CD8-positive, alpha-beta T cell (primary cell): ENCODE measurements at regions of chr14 and their contacts with region 1.

Region 1: DNA sequence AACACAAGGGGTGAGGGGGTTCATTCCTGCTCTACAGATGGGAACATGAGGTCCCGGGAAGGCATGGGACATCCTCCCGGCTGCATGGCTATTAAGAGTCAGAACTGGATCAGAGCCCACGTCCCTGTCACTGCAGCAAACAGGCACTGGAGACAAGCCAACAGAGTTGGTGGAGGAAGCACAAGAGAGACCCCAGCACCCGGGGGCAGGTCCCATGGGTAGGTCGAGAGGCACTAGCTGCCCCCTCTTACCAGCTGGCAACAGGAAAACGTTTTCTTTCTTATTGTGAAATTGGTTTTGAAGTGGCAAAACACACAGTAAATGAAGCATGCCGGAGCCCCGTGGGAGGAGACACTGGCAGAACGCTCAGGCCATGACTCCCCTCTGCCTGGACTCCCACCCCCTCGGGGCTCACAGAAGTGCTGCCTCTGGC is 43.6 kb downstream of the SYNE3 start:
- DNase-seq: peak in 1 of 9 experiments; percentile 11
- ATAC-seq: peak; percentile 26
- H3K4me3 ChIP-seq: peak overlapping the region in 1 of 2 experiments; percentile 18
- H3K4me3 Mint-ChIP-seq: peak overlapping the region; percentile 46
- H3K27ac ChIP-seq: peak overlapping the region; percentile 10 to 54
- H3K27ac Mint-ChIP-seq: peak overlapping the region; percentile 94
- H3K4me1 ChIP-seq: peaks cover 27% of the 10 kb centered on the region
- H3K4me1 Mint-ChIP-seq: peaks cover 53% of the 10 kb centered on the region
- H3K27me3 ChIP-seq: no peaks in the 10 kb centered on the region
- H3K27me3 Mint-ChIP-seq: no peaks in the 10 kb centered on the region
- CTCF ChIP-seq: no peak

Region 2: DNA sequence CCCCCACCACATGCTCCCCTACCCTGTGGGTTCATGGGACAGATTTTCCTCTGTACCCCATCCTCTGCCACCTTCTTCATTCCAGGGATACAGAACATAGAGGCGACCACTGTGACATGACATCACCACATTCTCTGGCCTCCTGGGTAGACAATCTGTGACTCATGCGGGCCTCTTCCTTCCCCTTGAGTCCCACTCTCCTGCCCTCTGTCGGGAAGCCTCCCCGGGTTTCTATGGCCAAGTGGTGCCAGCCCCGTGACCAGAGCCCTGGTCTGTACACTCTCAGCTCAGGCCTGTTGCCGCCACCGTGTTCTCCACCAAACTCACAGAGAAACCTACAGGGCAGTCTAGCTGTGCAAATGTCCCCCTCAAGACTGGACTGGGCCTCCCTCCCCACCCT is 161.1 kb before region 1 on chr14:
- CTCF ChIA-PET with region 1: no interaction called
- POLR2A ChIA-PET with region 1: no interaction called
- intact Hi-C with region 1: no loop called
- DNase-seq: peak in 1 of 9 experiments; percentile 18
- ATAC-seq: no peak
- H3K4me3 ChIP-seq: no peak overlapping the region
- H3K4me3 Mint-ChIP-seq: no peak overlapping the region
- H3K27ac ChIP-seq: no peak overlapping the region
- H3K27ac Mint-ChIP-seq: no peak overlapping the region
- H3K4me1 ChIP-seq: no peaks in the 10 kb centered on the region
- H3K4me1 Mint-ChIP-seq: no peaks in the 10 kb centered on the region
- H3K27me3 ChIP-seq: no peaks in the 10 kb centered on the region
- H3K27me3 Mint-ChIP-seq: peaks cover 2% of the 10 kb centered on the region
- CTCF ChIP-seq: no peak

Region 3: GRCh38 chr14:95431199-95432143 is 41.4 kb before region 1 on chr14:
- CTCF ChIA-PET with region 1: no interaction called
- POLR2A ChIA-PET with region 1: no interaction called
- intact Hi-C with region 1: no loop called
- DNase-seq: peak in 1 of 9 experiments; percentile 20
- ATAC-seq: no peak
- H3K4me3 ChIP-seq: no peak overlapping the region
- H3K4me3 Mint-ChIP-seq: no peak overlapping the region
- H3K27ac ChIP-seq: no peak overlapping the region
- H3K27ac Mint-ChIP-seq: peak overlapping the region; percentile 37
- H3K4me1 ChIP-seq: no peaks in the 10 kb centered on the region
- H3K4me1 Mint-ChIP-seq: peaks cover 3% of the 10 kb centered on the region
- H3K27me3 ChIP-seq: no peaks in the 10 kb centered on the region
- H3K27me3 Mint-ChIP-seq: no peaks in the 10 kb centered on the region
- CTCF ChIP-seq: peak; percentile 12

Region 4: GRCh38 chr14:95460647-95461478 is 12.0 kb before region 1 on chr14:
- CTCF ChIA-PET with region 1: interaction called, 9 read pairs
- POLR2A ChIA-PET with region 1: interaction called, 18 read pairs
- intact Hi-C with region 1: no loop called
- DNase-seq: no peak
- ATAC-seq: no peak
- H3K4me3 ChIP-seq: no peak overlapping the region
- H3K4me3 Mint-ChIP-seq: no peak overlapping the region
- H3K27ac ChIP-seq: no peak overlapping the region
- H3K27ac Mint-ChIP-seq: peak overlapping the region; percentile 98
- H3K4me1 ChIP-seq: peaks cover 46% of the 10 kb centered on the region
- H3K4me1 Mint-ChIP-seq: peaks cover 48% of the 10 kb centered on the region
- H3K27me3 ChIP-seq: no peaks in the 10 kb centered on the region
- H3K27me3 Mint-ChIP-seq: no peaks in the 10 kb centered on the region
- CTCF ChIP-seq: no peak